HEK293 (cell line): ENCODE measurements at regions of chr13 and their contacts with region 1.

Region 1: GRCh38 chr13:40653527-40654318 is 12.7 kb downstream of the FOXO1 start:
- H3K4me3 ChIP-seq: no peak overlapping the region
- H3K27ac ChIP-seq: no peak overlapping the region
- H3K4me1 ChIP-seq: peaks cover under 1% of the 10 kb centered on the region; the same call in 1 of the 2 replicates
- CTCF ChIP-seq: no peak

Region 2: DNA sequence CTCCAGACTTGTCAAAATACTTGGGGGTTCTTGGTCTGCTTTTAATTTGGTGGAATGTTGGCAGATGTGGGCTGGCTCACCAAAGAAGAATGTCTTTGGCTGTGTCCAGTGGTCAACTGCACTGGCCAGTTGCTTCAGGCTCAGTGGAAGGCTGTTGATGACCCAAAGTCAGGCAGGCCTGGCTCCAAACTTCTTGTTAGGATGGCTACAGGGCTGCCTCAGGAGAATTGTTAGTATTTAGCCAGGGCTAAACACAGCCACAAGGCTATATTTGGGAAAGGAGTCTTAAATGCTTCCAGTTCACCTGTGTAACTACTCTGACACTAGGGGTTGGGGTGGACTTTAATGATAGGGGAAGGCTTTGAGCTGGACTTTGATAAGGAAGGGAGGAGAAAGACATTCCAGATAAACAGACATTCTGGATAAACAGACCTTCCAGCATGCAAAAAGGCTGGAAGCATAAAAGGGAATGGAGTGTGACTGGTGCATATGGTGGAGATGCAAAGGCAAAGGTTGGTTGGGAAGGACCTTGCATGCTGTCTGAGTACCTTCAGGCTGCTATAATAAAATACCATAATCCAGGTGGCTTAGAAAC is 104.1 kb before region 1 on chr13:
- CTCF ChIA-PET with region 1: no interaction called
- POLR2A ChIA-PET with region 1: interaction called, 12 read pairs
- H3K4me3 ChIP-seq: no peak overlapping the region
- H3K27ac ChIP-seq: no peak overlapping the region
- H3K4me1 ChIP-seq: no peaks in the 10 kb centered on the region
- CTCF ChIP-seq: no peak

Region 3: GRCh38 chr13:40585911-40586471 is 67.7 kb before region 1 on chr13:
- CTCF ChIA-PET with region 1: no interaction called
- POLR2A ChIA-PET with region 1: no interaction called
- H3K4me3 ChIP-seq: no peak overlapping the region
- H3K27ac ChIP-seq: no peak overlapping the region
- H3K4me1 ChIP-seq: peaks cover 8% of the 10 kb centered on the region
- CTCF ChIP-seq: no peak

Region 4: DNA sequence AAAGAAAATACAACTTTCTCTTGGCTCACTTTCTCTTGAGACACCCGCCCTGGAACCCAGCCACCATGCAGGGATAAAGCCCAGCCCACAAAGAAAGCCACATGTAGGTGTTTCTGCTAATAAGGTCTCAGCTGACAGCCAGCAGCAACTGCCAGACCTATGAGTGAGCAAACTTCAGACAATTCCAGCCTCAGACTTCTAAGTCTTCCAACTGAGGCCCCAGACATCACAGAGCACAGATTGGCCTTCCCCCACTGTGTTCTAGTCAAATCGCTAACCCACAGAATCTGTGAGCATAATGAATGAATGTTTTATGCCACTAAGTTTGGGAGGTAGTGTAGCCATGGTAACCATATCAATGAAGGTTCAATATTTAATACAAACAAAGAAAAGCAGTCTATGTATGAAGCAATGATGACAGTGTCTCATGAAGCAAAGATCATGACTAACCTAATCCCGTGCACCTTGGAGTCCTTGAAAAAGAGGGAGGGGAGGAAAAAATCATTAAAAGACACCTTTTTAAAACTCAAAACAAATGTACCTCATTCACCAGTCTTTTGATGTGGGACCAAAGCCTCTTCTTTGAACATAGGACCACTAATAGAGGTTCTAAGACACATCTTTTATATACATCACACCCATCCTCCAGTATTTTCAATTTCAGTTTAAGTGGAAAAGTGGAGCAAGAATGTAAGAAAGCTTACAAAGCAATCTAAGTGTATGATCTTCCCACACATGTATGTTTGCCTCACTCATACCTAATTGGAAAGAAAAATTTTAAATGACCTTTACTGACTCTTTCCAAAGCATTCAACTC is 111.1 kb after region 1 on chr13:
- CTCF ChIA-PET with region 1: no interaction called
- POLR2A ChIA-PET with region 1: no interaction called
- H3K4me3 ChIP-seq: no peak overlapping the region
- H3K27ac ChIP-seq: no peak overlapping the region
- H3K4me1 ChIP-seq: no peaks in the 10 kb centered on the region
- CTCF ChIP-seq: no peak